Heart right ventricle (tissue), 16 donors: ENCODE measurements at regions of chr6 and their contacts with region 1.

Region 1: GRCh38 chr6:56542364-56543331 is 100.0 kb downstream of the DST start:
- DNase-seq: peak; percentile 88 to 93
- ATAC-seq: peak; percentile 93 to 98 (median 95)
- H3K4me3 ChIP-seq: peak overlapping the region; percentile 27 to 73 (median 62)
- H3K27ac ChIP-seq: peak overlapping the region; percentile 77 to 93 (median 92)
- H3K4me1 ChIP-seq: peaks cover 2 to 69% (median 54%) of the 10 kb centered on the region in 9 donors
- H3K27me3 ChIP-seq: no peaks in the 10 kb centered on the region
- CTCF ChIP-seq: peak in 7 of 9 donors; percentile 10 to 74 (median 46)

Region 2: GRCh38 chr6:56475736-56476457 is 66.8 kb before region 1 on chr6:
- intact Hi-C with region 1: loop called in 1 of 10 experiments (anchors 10 kb)
- DNase-seq: peak in 1 of 2 donors; percentile 69
- ATAC-seq: peak in 7 of 8 donors; percentile 70 to 92 (median 86)
- H3K4me3 ChIP-seq: no peak overlapping the region
- H3K27ac ChIP-seq: peak overlapping the region in 3 of 10 donors; percentile 28 to 57 (median 49)
- H3K4me1 ChIP-seq: peaks cover 0 to 27% (median 17%) of the 10 kb centered on the region in 9 donors
- H3K27me3 ChIP-seq: no peaks in the 10 kb centered on the region
- CTCF ChIP-seq: no peak

Region 3: GRCh38 chr6:56491606-56492328 is 50.9 kb before region 1 on chr6:
- intact Hi-C with region 1: loop called in 1 of 10 experiments (anchors 5 kb)
- DNase-seq: peak in 1 of 2 donors; percentile 74
- ATAC-seq: peak in 7 of 8 donors; percentile 61 to 92 (median 83)
- H3K4me3 ChIP-seq: no peak overlapping the region
- H3K27ac ChIP-seq: peak overlapping the region in 8 of 10 donors; percentile 6 to 71 (median 40)
- H3K4me1 ChIP-seq: peaks cover 0 to 24% (median 13%) of the 10 kb centered on the region in 9 donors
- H3K27me3 ChIP-seq: no peaks in the 10 kb centered on the region
- CTCF ChIP-seq: no peak

Region 4: GRCh38 chr6:56499095-56499494 is 43.6 kb before region 1 on chr6:
- intact Hi-C with region 1: loop called in 2 of 10 experiments (anchors 5 kb)
- DNase-seq: no peak
- ATAC-seq: peak in 1 of 8 donors; percentile 22
- H3K4me3 ChIP-seq: no peak overlapping the region
- H3K27ac ChIP-seq: peak overlapping the region in 4 of 10 donors; percentile 0 to 38 (median 10)
- H3K4me1 ChIP-seq: peaks cover 0 to 28% (median 6%) of the 10 kb centered on the region in 9 donors
- H3K27me3 ChIP-seq: no peaks in the 10 kb centered on the region
- CTCF ChIP-seq: no peak

Region 5: GRCh38 chr6:56570413-56571359 is 28.0 kb after region 1 on chr6:
- intact Hi-C with region 1: no loop called
- DNase-seq: no peak
- ATAC-seq: peak; percentile 12 to 76 (median 72)
- H3K4me3 ChIP-seq: no peak overlapping the region
- H3K27ac ChIP-seq: no peak overlapping the region
- H3K4me1 ChIP-seq: peaks cover 0 to 25% (median 3%) of the 10 kb centered on the region in 9 donors
- H3K27me3 ChIP-seq: no peaks in the 10 kb centered on the region
- CTCF ChIP-seq: peak; percentile 43 to 78 (median 63)

Region 6: DNA sequence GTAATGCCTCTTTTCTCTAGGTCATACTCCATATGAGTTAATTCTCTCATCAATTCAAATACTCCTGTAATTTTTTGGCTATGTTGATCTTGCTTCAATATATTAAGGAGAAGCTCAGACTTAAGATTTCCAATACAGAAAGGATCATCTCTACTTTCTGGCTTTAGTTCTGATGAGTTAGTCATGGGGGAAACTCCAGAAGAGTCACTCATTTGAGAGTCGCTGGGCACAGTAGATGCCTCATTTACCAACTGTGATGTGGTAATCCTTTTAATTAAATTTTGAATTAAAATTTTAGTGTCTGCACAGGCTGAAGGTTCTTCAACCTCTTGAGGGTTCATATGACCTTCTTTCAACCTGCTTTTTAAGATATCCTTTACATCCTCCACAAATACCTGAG is 61.5 kb after region 1 on chr6:
- intact Hi-C with region 1: no loop called
- DNase-seq: no peak
- ATAC-seq: no peak
- H3K4me3 ChIP-seq: no peak overlapping the region
- H3K27ac ChIP-seq: no peak overlapping the region
- H3K4me1 ChIP-seq: no peaks in the 10 kb centered on the region
- H3K27me3 ChIP-seq: no peaks in the 10 kb centered on the region
- CTCF ChIP-seq: no peak